HEK293T (cell line): ENCODE measurements at regions of chr11 and their contacts with region 1.

Region 1: DNA sequence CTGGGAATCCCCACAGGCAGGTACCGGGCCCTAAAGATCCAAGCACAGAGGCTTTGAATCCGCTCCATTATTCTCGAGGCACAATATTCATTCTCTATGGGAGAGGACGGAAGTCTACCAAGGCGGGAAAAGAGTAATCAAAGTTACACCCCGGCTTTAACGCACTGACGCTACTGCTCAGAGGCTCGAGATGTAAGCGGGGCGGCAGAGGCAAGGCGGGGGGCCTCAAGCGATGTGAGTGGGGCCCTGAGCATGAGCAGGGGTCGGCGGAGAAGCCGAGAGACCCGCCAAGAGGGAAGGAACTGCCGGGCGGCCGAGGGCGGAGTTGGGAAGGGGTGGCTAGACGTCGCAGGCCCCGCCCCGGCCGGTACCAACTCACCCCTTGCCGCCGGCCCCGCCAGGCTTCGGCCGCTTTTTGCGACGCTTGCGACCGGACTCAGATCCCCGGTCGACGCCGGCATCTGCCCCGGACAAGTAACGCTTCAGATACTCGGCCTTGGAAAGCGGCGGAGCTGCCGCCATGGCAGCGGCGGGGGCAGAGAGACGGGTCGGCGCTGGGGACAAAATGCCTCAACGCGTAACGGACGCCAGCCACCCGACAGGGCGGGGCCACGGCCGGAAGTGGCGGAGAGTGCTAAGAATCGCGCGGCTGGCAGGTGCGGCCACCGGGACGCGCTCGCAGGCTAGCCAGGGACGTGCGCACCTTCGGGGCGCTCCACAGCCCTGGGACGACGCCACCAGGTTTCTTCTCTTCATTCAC is at the start of gene BUD13:
- DNase-seq: peak; percentile 90

Region 2: GRCh38 chr11:116725434-116726221 is 47.0 kb before region 1 on chr11:
- CTCF ChIA-PET with region 1: no interaction called
- POLR2A ChIA-PET with region 1: no interaction called
- DNase-seq: no peak

Region 3: DNA sequence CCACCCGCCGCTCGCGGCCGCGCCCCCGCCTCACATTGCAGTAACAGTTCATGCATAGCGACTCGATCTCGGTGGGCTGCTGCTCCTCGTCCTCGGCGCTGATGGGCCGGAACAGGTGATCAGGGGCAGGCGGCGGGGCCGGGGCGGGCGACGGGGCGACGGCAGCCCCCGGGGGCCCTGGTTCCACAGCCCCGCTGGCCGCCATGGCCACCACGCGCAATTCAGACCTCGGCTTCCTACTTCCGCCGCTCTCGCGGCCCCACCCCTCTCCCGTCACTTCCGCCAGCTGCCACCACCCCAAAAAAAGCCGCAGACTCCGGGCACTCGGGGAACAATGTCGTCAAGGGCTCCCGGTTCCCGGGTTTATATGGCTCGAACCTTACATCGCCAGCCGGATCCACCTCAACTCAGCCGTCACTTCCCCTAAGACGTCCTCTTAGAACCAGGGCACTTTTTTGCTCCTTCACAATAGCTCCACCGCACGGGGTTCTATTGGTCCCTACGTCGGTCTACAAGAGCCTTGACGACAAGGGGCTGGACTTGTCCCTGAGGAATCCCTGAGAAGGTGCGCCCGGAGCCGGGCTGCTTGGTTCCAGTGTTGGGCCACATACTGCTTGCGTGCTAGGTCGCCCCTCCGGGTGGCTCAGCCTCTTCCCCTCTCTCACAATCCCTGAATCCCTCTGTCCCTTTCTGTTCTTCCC is 15.3 kb after region 1 on chr11 and contains the start of gene ZPR1:
- CTCF ChIA-PET with region 1: no interaction called
- POLR2A ChIA-PET with region 1: interaction called, 18 read pairs
- DNase-seq: peak; percentile 79

Region 4: DNA sequence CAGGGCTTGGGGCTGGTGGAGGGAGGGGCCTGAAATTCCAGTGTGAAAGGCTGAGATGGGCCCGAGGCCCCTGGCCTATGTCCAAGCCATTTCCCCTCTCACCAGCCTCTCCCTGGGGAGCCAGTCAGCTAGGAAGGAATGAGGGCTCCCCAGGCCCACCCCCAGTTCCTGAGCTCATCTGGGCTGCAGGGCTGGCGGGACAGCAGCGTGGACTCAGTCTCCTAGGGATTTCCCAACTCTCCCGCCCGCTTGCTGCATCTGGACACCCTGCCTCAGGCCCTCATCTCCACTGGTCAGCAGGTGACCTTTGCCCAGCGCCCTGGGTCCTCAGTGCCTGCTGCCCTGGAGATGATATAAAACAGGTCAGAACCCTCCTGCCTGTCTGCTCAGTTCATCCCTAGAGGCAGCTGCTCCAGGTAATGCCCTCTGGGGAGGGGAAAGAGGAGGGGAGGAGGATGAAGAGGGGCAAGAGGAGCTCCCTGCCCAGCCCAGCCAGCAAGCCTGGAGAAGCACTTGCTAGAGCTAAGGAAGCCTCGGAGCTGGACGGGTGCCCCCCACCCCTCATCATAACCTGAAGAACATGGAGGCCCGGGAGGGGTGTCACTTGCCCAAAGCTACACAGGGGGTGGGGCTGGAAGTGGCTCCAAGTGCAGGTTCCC is 57.0 kb after region 1 on chr11 and contains the start of gene APOC3:
- CTCF ChIA-PET with region 1: no interaction called
- POLR2A ChIA-PET with region 1: no interaction called
- DNase-seq: no peak